GM23248 (cell line): ENCODE measurements at regions of chr13 and their contacts with region 1.

Region 1: DNA sequence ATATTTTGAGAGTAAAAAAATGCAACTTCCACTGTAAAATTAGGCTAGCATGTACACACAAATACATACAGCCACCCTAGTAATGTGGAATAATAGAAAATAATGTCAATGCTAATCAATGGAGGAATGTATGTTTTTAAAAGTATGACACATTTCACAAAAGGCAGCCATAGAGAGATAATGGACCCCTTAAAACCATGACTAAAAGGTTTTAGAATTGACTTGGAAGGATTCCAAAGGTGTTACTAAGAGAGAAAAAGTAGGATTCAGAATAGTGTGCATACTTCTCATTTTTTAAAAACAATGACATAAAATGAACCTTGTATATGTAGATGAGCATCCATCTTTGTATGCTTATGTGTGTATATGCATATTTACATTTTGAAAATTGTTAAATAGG is 597.9 kb upstream of the PCDH9 start:
- DNase-seq: no peak
- H3K4me3 ChIP-seq: no peak overlapping the region
- H3K27ac ChIP-seq: no peak overlapping the region
- H3K4me1 ChIP-seq: no peaks in the 10 kb centered on the region
- H3K27me3 ChIP-seq: no peaks in the 10 kb centered on the region

Region 2: DNA sequence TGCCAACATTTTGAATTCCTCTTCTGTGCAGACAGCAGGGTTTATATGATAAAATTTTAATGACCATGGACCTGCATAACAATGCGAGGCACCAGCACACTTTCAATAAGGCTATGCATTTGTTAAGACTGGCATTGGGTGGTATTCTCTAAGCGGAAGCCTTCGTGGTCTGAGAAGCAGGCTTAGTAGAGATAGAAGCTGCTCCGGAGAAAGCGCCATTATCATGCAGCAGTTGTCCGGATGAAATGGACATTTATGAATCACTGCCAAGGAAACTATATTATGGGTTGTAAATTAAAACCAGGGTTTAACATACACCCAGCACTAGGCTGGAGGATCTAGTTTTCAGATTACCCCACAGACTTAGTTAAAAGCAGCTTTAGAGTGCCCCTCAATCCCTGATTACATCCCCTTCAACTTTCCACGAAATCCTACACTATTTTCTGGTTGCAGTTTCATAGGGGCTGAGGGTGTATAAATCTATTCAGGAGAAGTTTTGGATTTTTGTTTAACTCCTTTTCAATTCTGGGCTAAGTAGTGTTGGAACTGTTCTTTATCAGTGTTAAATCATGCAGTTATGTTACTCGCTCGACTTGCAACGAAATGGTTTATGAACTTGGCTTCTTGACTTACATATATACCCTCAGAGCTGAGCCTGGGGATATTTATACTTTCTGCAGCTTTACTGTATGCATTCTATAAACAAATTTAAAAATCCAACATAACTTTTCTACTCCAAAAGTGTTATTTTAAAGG is 791.1 kb before region 1 on chr13:
- in situ Hi-C with region 1: no loop called
- DNase-seq: no peak
- H3K4me3 ChIP-seq: no peak overlapping the region
- H3K27ac ChIP-seq: no peak overlapping the region
- H3K4me1 ChIP-seq: no peaks in the 10 kb centered on the region
- H3K27me3 ChIP-seq: no peaks in the 10 kb centered on the region

Region 3: GRCh38 chr13:67880916-67881315 is 52.9 kb after region 1 on chr13:
- in situ Hi-C with region 1: loop called (anchors 10 kb)
- DNase-seq: no peak
- H3K4me3 ChIP-seq: no peak overlapping the region
- H3K27ac ChIP-seq: no peak overlapping the region
- H3K4me1 ChIP-seq: no peaks in the 10 kb centered on the region
- H3K27me3 ChIP-seq: no peaks in the 10 kb centered on the region